Dendritic cell treated with granulocyte-macrophage colony-stimulating factor and Interleukin-4, amounts not matched to agents 40 ng/mL and 50 ng/mL, for 4 days (primary cell): ENCODE measurements at regions of chr18 and their contacts with region 1.

Region 1: GRCh38 chr18:65227970-65228369 is 522.8 kb upstream of the CDH7 start:
- H3K4me3 Mint-ChIP-seq: no peak overlapping the region
- H3K27ac Mint-ChIP-seq: no peak overlapping the region
- H3K4me1 Mint-ChIP-seq: no peaks in the 10 kb centered on the region
- H3K27me3 Mint-ChIP-seq: no peaks in the 10 kb centered on the region

Region 2: DNA sequence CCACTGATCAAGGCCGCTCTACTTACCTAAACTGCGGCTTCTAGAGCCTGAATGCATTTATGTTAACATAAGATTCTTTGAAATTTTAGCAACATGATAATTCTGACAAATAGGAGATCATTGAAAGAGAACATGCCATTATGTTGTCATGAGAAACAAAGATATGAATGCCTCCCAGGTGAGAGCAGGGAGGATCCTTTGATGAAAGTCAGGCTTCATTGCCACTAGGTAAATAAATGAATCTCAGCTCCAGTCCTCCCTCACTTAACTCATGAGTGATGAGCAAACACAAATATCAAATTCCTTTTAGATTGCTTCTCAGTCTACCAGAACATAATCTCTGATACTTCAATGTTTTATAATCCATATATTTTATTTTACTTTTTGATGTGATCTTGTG is 59.7 kb after region 1 on chr18:
- intact Hi-C with region 1: loop called (anchors 10 kb)
- H3K4me3 Mint-ChIP-seq: no peak overlapping the region
- H3K27ac Mint-ChIP-seq: no peak overlapping the region
- H3K4me1 Mint-ChIP-seq: no peaks in the 10 kb centered on the region
- H3K27me3 Mint-ChIP-seq: no peaks in the 10 kb centered on the region